Activated CD4-positive, alpha-beta memory T cell treated with anti-CD3 and anti-CD28 coated beads for 36 hours (primary cell): ENCODE measurements at regions of chr3 and their contacts with region 1.

Region 1: GRCh38 chr3:39288300-39288808 is 8.5 kb upstream of the CX3CR1 start:
- DNase-seq: peak; percentile 91
- H3K4me3 Mint-ChIP-seq: no peak overlapping the region
- H3K27ac Mint-ChIP-seq: peak overlapping the region; percentile 13
- H3K4me1 Mint-ChIP-seq: peaks cover 24% of the 10 kb centered on the region
- H3K27me3 Mint-ChIP-seq: no peaks in the 10 kb centered on the region

Region 2: GRCh38 chr3:38689774-38690173 is 598.6 kb before region 1 on chr3:
- CTCF ChIA-PET with region 1: no interaction called
- POLR2A ChIA-PET with region 1: no interaction called
- intact Hi-C with region 1: no loop called
- DNase-seq: no peak
- H3K4me3 Mint-ChIP-seq: no peak overlapping the region
- H3K27ac Mint-ChIP-seq: no peak overlapping the region
- H3K4me1 Mint-ChIP-seq: no peaks in the 10 kb centered on the region
- H3K27me3 Mint-ChIP-seq: no peaks in the 10 kb centered on the region

Region 3: DNA sequence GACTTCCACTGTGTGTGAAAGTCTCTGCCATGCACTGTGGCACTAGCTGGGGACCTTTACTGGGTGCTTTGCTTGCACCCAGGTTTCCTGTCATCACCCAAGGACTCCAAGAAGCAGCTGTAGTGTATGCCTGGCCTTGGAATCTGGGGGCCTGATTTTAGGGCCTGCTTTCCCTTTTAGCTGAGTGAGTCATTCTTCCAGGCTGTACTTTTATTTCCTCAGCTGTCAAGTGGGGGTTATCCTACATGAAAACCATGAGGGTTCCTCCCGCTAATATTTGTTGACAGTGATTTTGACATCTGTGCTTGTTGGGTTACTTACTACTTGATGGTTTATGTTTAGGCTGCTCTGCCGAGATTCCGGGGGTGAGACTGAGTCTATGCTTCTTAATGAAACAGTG is 199.5 kb before region 1 on chr3:
- CTCF ChIA-PET with region 1: interaction called, 14 read pairs
- POLR2A ChIA-PET with region 1: no interaction called
- intact Hi-C with region 1: no loop called
- DNase-seq: no peak
- H3K4me3 Mint-ChIP-seq: no peak overlapping the region
- H3K27ac Mint-ChIP-seq: no peak overlapping the region
- H3K4me1 Mint-ChIP-seq: no peaks in the 10 kb centered on the region
- H3K27me3 Mint-ChIP-seq: no peaks in the 10 kb centered on the region

Region 4: GRCh38 chr3:39126532-39127071 is 161.8 kb before region 1 on chr3:
- CTCF ChIA-PET with region 1: interaction called, 173 read pairs
- POLR2A ChIA-PET with region 1: no interaction called
- intact Hi-C with region 1: loop called (anchors 1 kb)
- DNase-seq: peak; percentile 65
- H3K4me3 Mint-ChIP-seq: no peak overlapping the region
- H3K27ac Mint-ChIP-seq: no peak overlapping the region
- H3K4me1 Mint-ChIP-seq: peaks cover 18% of the 10 kb centered on the region
- H3K27me3 Mint-ChIP-seq: no peaks in the 10 kb centered on the region

Region 5: DNA sequence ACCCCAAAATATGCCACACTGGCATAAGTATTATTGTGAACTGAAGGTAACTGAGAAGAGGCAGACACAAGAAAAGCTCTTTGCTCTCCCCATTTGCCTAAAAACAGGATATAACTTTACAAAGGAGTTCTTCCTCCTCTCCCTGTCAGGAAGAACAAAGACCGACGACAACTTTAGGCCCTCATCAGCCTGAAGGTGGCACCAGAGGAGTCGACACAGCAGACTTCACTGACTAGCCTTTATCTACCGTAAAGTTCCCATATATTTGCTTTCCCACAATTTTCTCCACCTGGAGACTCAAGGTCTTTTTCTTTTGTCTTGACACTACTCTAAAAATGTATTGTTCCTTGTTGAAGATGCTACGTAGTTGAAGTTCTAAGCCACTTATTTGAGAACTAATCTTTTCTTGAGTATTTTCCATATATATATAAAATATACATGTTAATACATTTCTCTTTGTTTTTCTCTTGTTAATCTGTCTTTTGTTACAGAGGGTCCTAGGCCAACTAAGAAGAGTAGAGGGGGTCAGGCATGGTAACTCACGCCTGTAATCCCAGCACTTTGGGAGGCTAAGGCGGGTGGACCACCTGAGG is 79.8 kb before region 1 on chr3:
- CTCF ChIA-PET with region 1: interaction called, 62 read pairs
- POLR2A ChIA-PET with region 1: no interaction called
- intact Hi-C with region 1: loop called (anchors 1 kb)
- DNase-seq: peak; percentile 55
- H3K4me3 Mint-ChIP-seq: no peak overlapping the region
- H3K27ac Mint-ChIP-seq: no peak overlapping the region
- H3K4me1 Mint-ChIP-seq: peaks cover 5% of the 10 kb centered on the region
- H3K27me3 Mint-ChIP-seq: no peaks in the 10 kb centered on the region

Region 6: GRCh38 chr3:39267631-39268548 is 20.5 kb before region 1 on chr3:
- CTCF ChIA-PET with region 1: interaction called, 34 read pairs
- POLR2A ChIA-PET with region 1: interaction called, 3 read pairs
- intact Hi-C with region 1: no loop called
- DNase-seq: peak; percentile 86
- H3K4me3 Mint-ChIP-seq: peak overlapping the region; percentile 45
- H3K27ac Mint-ChIP-seq: peak overlapping the region; percentile 94
- H3K4me1 Mint-ChIP-seq: peaks cover 30% of the 10 kb centered on the region
- H3K27me3 Mint-ChIP-seq: no peaks in the 10 kb centered on the region

Region 7: GRCh38 chr3:39361252-39361927 is 73.0 kb after region 1 on chr3:
- CTCF ChIA-PET with region 1: interaction called, 14 read pairs
- POLR2A ChIA-PET with region 1: no interaction called
- intact Hi-C with region 1: no loop called
- DNase-seq: peak; percentile 75
- H3K4me3 Mint-ChIP-seq: peak overlapping the region; percentile 35
- H3K27ac Mint-ChIP-seq: peak overlapping the region; percentile 53
- H3K4me1 Mint-ChIP-seq: peaks cover 43% of the 10 kb centered on the region
- H3K27me3 Mint-ChIP-seq: no peaks in the 10 kb centered on the region